Caco-2 (cell line): ENCODE measurements at regions of chr4 and their contacts with region 1.

Region 1: GRCh38 chr4:112853662-112854256 is 195.7 kb upstream of the ANK2 start:
- DNase-seq: no peak
- H3K4me3 ChIP-seq: no peak overlapping the region
- H3K4me3 Mint-ChIP-seq: no peak overlapping the region
- H3K27ac Mint-ChIP-seq: no peak overlapping the region
- H3K4me1 ChIP-seq: peaks cover 15% of the 10 kb centered on the region; the same call in 1 of the 2 replicates
- H3K4me1 Mint-ChIP-seq: peaks cover 18% of the 10 kb centered on the region
- H3K27me3 ChIP-seq: no peaks in the 10 kb centered on the region
- H3K27me3 Mint-ChIP-seq: no peaks in the 10 kb centered on the region
- CTCF ChIP-seq: peak; percentile 41 to 46

Region 2: GRCh38 chr4:112817933-112818593 is 35.7 kb before region 1 on chr4:
- CTCF ChIA-PET with region 1: no interaction called
- POLR2A ChIA-PET with region 1: no interaction called
- intact Hi-C with region 1: loop called (anchors 2 kb)
- DNase-seq: peak; percentile 74 to 75
- H3K4me3 ChIP-seq: peak overlapping the region; percentile 13
- H3K4me3 Mint-ChIP-seq: peak overlapping the region; percentile 80
- H3K27ac Mint-ChIP-seq: peak overlapping the region; percentile 70
- H3K4me1 ChIP-seq: 0 out of 2 replicates have a peak, but pooled peaks cover 6% of the 10 kb centered on the region
- H3K4me1 Mint-ChIP-seq: peaks cover 7% of the 10 kb centered on the region
- H3K27me3 ChIP-seq: no peaks in the 10 kb centered on the region
- H3K27me3 Mint-ChIP-seq: no peaks in the 10 kb centered on the region
- CTCF ChIP-seq: no peak

Region 3: DNA sequence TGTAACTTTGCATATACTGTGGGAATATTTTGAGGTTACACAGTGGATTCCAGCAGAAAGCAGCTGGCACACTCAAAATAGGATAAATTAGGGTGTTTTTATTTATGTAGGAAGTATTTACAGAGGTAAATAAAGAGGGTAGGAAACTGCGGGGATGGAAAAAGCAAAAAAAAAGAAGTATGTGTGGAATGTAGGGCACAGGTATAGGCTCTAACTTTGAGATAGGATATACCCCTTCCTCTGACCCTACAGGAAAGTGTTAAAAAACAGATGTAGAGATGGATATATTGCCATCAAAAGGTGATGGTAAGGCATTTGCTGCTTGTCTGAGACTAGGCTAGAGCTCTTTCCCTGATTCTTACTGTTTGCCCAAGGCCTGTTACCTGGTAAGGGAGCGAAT is 22.6 kb after region 1 on chr4:
- CTCF ChIA-PET with region 1: no interaction called
- POLR2A ChIA-PET with region 1: no interaction called
- intact Hi-C with region 1: no loop called
- DNase-seq: no peak
- H3K4me3 ChIP-seq: no peak overlapping the region
- H3K4me3 Mint-ChIP-seq: no peak overlapping the region
- H3K27ac Mint-ChIP-seq: no peak overlapping the region
- H3K4me1 ChIP-seq: no peaks in the 10 kb centered on the region
- H3K4me1 Mint-ChIP-seq: peaks cover 6% of the 10 kb centered on the region
- H3K27me3 ChIP-seq: no peaks in the 10 kb centered on the region
- H3K27me3 Mint-ChIP-seq: no peaks in the 10 kb centered on the region
- CTCF ChIP-seq: no peak

Region 4: GRCh38 chr4:112895811-112896608 is 42.3 kb after region 1 on chr4:
- CTCF ChIA-PET with region 1: interaction called, 3 read pairs
- POLR2A ChIA-PET with region 1: no interaction called
- intact Hi-C with region 1: loop called (anchors 5 kb)
- DNase-seq: no peak
- H3K4me3 ChIP-seq: no peak overlapping the region
- H3K4me3 Mint-ChIP-seq: peak overlapping the region; percentile 29
- H3K27ac Mint-ChIP-seq: peak overlapping the region; percentile 21
- H3K4me1 ChIP-seq: peaks cover 60% of the 10 kb centered on the region
- H3K4me1 Mint-ChIP-seq: peaks cover 36% of the 10 kb centered on the region
- H3K27me3 ChIP-seq: no peaks in the 10 kb centered on the region
- H3K27me3 Mint-ChIP-seq: no peaks in the 10 kb centered on the region
- CTCF ChIP-seq: no peak

Region 5: DNA sequence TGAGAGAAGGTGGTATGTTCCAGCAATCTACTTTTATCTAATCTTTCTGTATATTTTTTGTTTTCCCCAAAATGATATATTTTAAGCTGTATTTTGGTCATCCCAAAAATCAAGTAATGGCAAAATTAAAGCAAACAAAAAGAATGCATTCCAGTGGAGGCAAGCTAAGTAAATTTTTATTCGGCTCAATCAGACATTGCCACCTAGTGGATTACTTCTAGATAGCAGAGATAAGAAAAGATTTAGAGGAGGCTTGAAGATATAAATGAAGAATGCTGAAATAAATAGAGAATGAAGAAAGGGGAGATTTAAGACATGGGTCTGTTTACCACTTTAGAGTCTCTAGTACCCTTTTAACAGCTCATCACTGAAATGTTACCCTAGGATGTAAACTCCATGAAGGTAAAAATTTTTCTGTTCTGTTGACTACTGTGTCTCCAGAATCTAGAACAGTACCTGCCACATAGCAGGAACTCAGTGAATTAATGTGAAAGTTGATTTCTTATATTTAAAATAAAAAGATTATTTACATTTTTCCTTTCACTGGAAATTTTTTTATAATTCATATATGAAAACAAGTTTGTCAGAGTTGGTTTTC is 84.8 kb after region 1 on chr4:
- CTCF ChIA-PET with region 1: interaction called, 9 read pairs
- POLR2A ChIA-PET with region 1: no interaction called
- intact Hi-C with region 1: loop called (anchors 1 kb)
- DNase-seq: peak in 1 of 2 experiments; percentile 31
- H3K4me3 ChIP-seq: no peak overlapping the region
- H3K4me3 Mint-ChIP-seq: no peak overlapping the region
- H3K27ac Mint-ChIP-seq: no peak overlapping the region
- H3K4me1 ChIP-seq: peaks cover 10% of the 10 kb centered on the region
- H3K4me1 Mint-ChIP-seq: no peaks in the 10 kb centered on the region
- H3K27me3 ChIP-seq: no peaks in the 10 kb centered on the region
- H3K27me3 Mint-ChIP-seq: no peaks in the 10 kb centered on the region
- CTCF ChIP-seq: peak; percentile 59 to 67